HEK293T (cell line): ENCODE measurements at regions of chr19 and their contacts with region 1.

Region 1: GRCh38 chr19:4457654-4458395 is at the start of gene UBXN6:
- DNase-seq: peak; percentile 92

Region 2: DNA sequence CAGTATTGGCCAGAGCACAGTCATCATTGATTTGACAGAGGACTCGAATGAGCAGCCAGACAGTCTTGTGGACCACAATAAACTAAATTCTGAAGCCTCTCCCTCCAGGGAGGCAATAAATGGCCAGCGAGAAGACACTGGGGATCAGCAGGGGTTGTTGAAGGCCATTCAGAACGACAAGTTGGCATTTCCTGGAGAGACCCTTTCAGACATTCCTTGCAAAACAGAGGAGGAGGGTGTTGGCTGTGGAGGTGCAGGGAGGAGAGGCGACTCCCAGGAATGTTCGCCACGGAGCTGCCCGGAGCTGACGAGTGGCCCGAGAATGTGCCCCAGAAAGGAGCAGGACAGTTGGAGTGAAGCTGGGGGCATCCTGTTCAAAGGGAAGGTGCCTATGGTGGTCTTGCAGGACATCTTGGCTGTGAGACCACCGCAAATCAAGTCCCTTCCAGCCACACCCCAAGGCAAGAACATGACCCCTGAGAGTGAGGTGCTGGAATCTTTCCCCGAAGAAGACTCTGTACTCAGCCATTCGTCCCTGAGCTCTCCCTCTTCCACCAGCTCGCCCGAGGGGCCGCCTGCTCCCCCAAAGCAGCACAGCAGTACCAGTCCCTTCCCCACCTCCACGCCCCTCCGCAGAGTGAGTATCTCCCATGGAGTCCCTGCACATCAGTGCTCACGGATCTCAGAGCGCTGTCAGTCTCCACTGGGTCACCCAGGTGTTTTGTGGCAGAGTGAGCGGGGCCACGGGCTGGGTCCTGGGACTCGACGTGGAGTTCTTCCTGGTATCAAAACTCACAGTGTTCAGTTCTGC is 48.5 kb before region 1 on chr19:
- CTCF ChIA-PET with region 1: no interaction called
- POLR2A ChIA-PET with region 1: no interaction called
- DNase-seq: no peak

Region 3: DNA sequence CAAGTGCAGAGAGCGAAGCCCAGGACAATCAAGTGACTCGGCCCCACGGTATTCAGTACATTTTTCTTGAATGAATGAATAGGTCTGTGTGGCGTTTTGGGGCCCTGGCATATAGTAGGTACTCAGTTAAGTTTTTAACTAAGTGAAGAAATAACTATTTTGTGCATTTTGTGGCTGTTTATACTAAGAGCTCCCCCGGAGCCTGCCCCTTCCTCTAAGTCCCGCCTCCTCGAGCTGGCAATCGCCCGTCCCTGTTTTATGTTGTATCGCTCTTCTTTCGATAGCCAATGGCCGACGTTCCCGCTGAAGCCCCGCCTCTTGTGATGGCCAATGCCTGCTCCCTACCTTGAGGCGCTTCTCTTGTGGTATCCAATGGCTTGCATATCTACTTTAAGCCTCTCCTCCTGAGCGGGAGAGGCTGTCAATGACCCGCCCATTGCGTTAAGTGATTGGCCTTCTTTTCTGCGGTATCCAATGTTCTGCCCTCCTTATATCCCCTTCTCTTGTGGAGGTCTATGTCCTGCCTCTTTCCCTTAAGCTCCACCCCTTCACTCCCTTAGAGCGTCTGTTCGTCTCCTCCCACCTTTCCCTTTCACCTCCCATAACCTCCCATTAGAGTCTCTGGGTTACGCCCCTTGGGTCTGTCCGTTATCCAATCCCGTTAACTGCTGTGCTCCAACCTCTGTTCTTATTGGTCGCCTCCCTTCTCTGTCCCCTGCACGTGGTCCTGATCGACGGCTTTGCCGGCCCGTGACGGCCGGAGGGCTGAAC is 13.8 kb after region 1 on chr19:
- CTCF ChIA-PET with region 1: no interaction called
- POLR2A ChIA-PET with region 1: interaction called, 20 read pairs
- DNase-seq: peak; percentile 95